Naive thymus-derived CD4-positive, alpha-beta T cell (primary cell): ENCODE measurements at regions of chr21 and their contacts with region 1.

Region 1: GRCh38 chr21:46622226-46622625 is 13.2 kb upstream of the PRMT2 start:
- DNase-seq: peak in 7 of 9 donors; percentile 50 to 86 (median 74)
- ATAC-seq: peak; percentile 87
- H3K4me3 ChIP-seq: peak overlapping the region; percentile 14
- H3K4me3 Mint-ChIP-seq: peak overlapping the region; percentile 62 to 82 (median 76)
- H3K27ac ChIP-seq: peak overlapping the region; percentile 80
- H3K27ac Mint-ChIP-seq: peak overlapping the region; percentile 93 to 98 (median 97)
- H3K4me1 ChIP-seq: peaks cover 35 to 67% of the 10 kb centered on the region in 2 donors
- H3K4me1 Mint-ChIP-seq: peaks cover 45 to 84% (median 73%) of the 10 kb centered on the region in 7 donors
- H3K27me3 ChIP-seq: no peaks in the 10 kb centered on the region
- H3K27me3 Mint-ChIP-seq: peaks cover 0 to 2% (median 0%) of the 10 kb centered on the region in 5 donors

Region 2: DNA sequence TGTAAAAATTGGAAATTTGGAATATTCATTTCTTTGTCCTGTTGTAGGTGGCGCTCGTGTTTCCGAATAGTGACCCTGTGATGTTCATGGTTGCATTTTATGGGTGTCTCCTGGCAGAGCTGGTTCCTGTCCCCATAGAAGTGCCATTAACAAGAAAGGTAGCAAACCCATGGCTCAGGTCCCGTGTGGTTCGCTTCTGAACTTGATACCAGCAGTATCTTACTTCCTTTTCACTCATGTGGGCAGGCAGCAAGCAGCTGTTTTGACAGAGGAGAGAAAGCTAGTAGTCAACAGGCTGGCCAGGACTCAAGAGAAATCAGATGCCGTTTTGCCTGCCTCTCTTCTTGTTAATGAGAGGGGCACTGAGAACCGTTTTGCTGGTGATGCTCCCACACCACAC is 90.1 kb before region 1 on chr21:
- CTCF ChIA-PET with region 1: interaction called, 4 read pairs
- POLR2A ChIA-PET with region 1: interaction called, 17 read pairs
- intact Hi-C with region 1: no loop called
- DNase-seq: peak in 6 of 9 donors; percentile 44 to 69 (median 54)
- ATAC-seq: peak; percentile 74
- H3K4me3 ChIP-seq: no peak overlapping the region
- H3K4me3 Mint-ChIP-seq: peak overlapping the region in 7 of 10 donors; percentile 41 to 77 (median 63)
- H3K27ac ChIP-seq: peak overlapping the region; percentile 32
- H3K27ac Mint-ChIP-seq: peak overlapping the region; percentile 42 to 97 (median 91)
- H3K4me1 ChIP-seq: peaks cover 0 to 14% of the 10 kb centered on the region in 2 donors
- H3K4me1 Mint-ChIP-seq: peaks cover 7 to 69% (median 62%) of the 10 kb centered on the region in 7 donors
- H3K27me3 ChIP-seq: no peaks in the 10 kb centered on the region
- H3K27me3 Mint-ChIP-seq: no peaks in the 10 kb centered on the region

Region 3: DNA sequence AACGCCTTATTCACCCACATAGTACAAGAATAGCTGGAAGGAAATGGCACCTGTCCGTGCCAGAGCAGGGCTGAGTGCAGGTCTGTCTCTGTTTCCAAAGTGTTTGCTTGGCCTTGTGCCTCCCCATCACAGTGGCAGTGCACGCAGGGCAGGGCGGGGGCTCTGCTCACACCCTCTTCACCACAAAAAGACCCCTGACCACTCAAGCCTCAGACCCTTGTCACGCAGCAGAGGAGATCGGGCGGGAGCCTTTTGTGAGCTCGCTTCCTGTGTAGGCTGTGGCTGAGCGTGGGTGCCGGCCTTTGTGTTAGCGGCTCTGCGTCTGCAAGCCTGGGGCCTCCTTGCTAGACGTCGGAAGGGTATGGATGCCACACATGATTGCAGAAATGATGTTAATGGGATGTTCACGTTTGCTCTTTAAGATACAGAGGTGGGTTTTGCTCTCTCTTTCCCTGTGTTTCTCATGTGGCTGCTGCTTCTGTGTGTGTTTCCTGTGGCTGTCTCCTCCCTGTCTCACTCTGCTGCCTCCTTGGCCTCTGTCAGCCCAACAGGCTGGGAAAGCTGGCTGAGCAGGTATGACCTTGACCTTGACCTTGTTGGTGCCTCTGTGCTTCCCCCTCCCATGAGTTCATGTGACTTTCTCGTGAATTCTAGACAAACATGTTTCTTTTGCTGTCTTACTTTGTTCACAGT is 62.8 kb before region 1 on chr21:
- CTCF ChIA-PET with region 1: interaction called, 4 read pairs
- POLR2A ChIA-PET with region 1: interaction called, 46 read pairs
- intact Hi-C with region 1: loop called in 1 of 2 experiments (anchors 1 kb)
- DNase-seq: peak; percentile 29 to 85 (median 76)
- ATAC-seq: peak; percentile 85
- H3K4me3 ChIP-seq: peak overlapping the region; percentile 24
- H3K4me3 Mint-ChIP-seq: peak overlapping the region; percentile 76 to 91 (median 82)
- H3K27ac ChIP-seq: peak overlapping the region; percentile 84
- H3K27ac Mint-ChIP-seq: peak overlapping the region; percentile 95 to 99 (median 97)
- H3K4me1 ChIP-seq: peaks cover 37 to 85% of the 10 kb centered on the region in 2 donors
- H3K4me1 Mint-ChIP-seq: peaks cover 39 to 95% (median 78%) of the 10 kb centered on the region in 7 donors
- H3K27me3 ChIP-seq: no peaks in the 10 kb centered on the region
- H3K27me3 Mint-ChIP-seq: no peaks in the 10 kb centered on the region

Region 4: GRCh38 chr21:46605767-46606426 is 16.3 kb before region 1 on chr21:
- CTCF ChIA-PET with region 1: interaction called, 5 read pairs
- POLR2A ChIA-PET with region 1: interaction called, 11 read pairs
- intact Hi-C with region 1: loop called in 1 of 2 experiments (anchors 2 kb)
- DNase-seq: peak in 8 of 9 donors; percentile 20 to 54 (median 43)
- ATAC-seq: peak; percentile 97
- H3K4me3 ChIP-seq: peak overlapping the region; percentile 22
- H3K4me3 Mint-ChIP-seq: peak overlapping the region; percentile 64 to 88 (median 73)
- H3K27ac ChIP-seq: peak overlapping the region; percentile 53
- H3K27ac Mint-ChIP-seq: peak overlapping the region; percentile 56 to 94 (median 89)
- H3K4me1 ChIP-seq: peaks cover 25 to 34% of the 10 kb centered on the region in 2 donors
- H3K4me1 Mint-ChIP-seq: peaks cover 28 to 82% (median 64%) of the 10 kb centered on the region in 7 donors
- H3K27me3 ChIP-seq: no peaks in the 10 kb centered on the region
- H3K27me3 Mint-ChIP-seq: peaks cover 0 to 1% (median 0%) of the 10 kb centered on the region in 5 donors